Heart left ventricle (tissue), 16 donors: ENCODE measurements at regions of chr9 and their contacts with region 1.

Region 1: DNA sequence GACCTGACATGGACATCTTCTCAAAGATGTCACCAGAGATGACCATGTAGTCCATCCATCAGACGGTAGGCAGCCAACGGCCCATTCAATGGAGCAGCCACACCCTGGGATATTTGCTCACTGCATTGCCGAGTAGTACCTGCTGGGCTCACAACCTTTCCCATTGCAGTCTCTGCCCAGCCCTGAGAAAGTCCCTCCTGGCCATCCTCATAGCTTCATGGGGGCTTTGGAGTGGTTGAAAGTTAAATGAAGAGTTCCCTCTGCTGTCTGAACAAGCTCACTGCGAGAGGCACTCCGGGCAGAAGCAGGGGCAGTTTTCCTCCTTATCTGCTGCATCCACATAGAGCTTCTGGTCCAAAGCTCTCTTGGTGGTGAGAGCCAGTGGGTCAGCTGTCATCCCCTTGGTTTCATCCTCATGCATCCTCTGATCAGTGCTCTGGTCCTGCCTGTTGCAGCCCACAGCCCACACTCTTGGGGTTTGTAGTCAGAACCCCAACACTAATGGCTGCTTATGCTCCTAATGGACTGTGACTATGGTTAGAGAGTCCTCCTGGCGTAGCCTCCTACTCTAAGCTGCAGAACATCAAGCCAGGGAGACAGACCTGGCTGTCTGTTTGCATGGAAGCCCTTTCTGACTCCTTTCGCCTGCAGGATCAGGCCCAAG is 23.4 kb downstream of the TNFSF8 start:
- DNase-seq: no peak
- ATAC-seq: peak in 1 of 4 donors; percentile 24
- H3K4me3 ChIP-seq: no peak overlapping the region
- H3K27ac ChIP-seq: peak overlapping the region in 1 of 12 donors; percentile 76
- H3K4me1 ChIP-seq: peaks cover 0 to 23% (median 0%) of the 10 kb centered on the region in 12 donors
- H3K27me3 ChIP-seq: peaks cover 0 to 15% (median 0%) of the 10 kb centered on the region in 9 donors
- CTCF ChIP-seq: peak in 9 of 12 donors; percentile 18 to 45 (median 37)
- POLR2A ChIP-seq: no peak

Region 2: GRCh38 chr9:114405294-114406034 is 501.6 kb before region 1 on chr9:
- intact Hi-C with region 1: loop called in 7 of 10 experiments (anchors 5 to 10 kb)
- DNase-seq: peak; percentile 73 to 81 (median 79)
- ATAC-seq: peak; percentile 76 to 95 (median 92)
- H3K4me3 ChIP-seq: no peak overlapping the region
- H3K27ac ChIP-seq: no peak overlapping the region
- H3K4me1 ChIP-seq: peaks cover 0 to 7% (median 0%) of the 10 kb centered on the region in 12 donors
- H3K27me3 ChIP-seq: no peaks in the 10 kb centered on the region
- CTCF ChIP-seq: peak; percentile 72 to 87 (median 82)
- POLR2A ChIP-seq: no peak

Region 3: DNA sequence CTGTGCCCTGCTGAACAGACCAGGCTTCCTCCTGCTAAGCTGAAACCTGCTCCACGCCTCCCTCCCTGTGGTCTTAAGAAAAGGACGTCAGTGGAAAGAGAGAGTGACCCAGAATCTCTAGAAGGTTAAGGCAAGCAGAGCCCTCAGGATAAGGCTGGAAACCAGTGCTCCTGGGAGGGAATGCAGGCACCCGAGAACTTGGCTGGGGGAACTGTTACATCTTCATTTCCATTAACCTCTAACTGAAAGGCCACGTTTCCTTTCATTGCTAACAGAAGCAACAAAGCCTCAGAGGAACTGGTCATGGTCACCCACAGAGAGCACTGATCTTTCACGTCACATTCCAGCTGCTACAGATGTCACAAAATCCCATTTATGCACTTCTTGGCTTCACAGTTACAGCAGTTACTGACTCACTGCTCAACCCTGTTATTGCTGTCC is 493.2 kb before region 1 on chr9:
- intact Hi-C with region 1: loop called in 7 of 10 experiments (anchors 5 to 10 kb)
- DNase-seq: no peak
- ATAC-seq: peak in 1 of 4 donors; percentile 43
- H3K4me3 ChIP-seq: no peak overlapping the region
- H3K27ac ChIP-seq: peak overlapping the region in 2 of 12 donors; percentile 33 to 51
- H3K4me1 ChIP-seq: peaks cover 0 to 12% (median 0%) of the 10 kb centered on the region in 12 donors
- H3K27me3 ChIP-seq: no peaks in the 10 kb centered on the region
- CTCF ChIP-seq: no peak
- POLR2A ChIP-seq: no peak

Region 4: GRCh38 chr9:114434878-114435311 is 472.1 kb before region 1 on chr9:
- intact Hi-C with region 1: loop called in 1 of 10 experiments (anchors 10 kb)
- DNase-seq: no peak
- ATAC-seq: peak in 2 of 4 donors; percentile 36 to 41
- H3K4me3 ChIP-seq: no peak overlapping the region
- H3K27ac ChIP-seq: no peak overlapping the region
- H3K4me1 ChIP-seq: no peaks in the 10 kb centered on the region
- H3K27me3 ChIP-seq: peaks cover 0 to 11% (median 3%) of the 10 kb centered on the region in 9 donors
- CTCF ChIP-seq: peak; percentile 11 to 58 (median 38)
- POLR2A ChIP-seq: no peak

Region 5: GRCh38 chr9:114681594-114682332 is 225.3 kb before region 1 on chr9 and contains the start of gene TEX48:
- intact Hi-C with region 1: loop called in 4 of 10 experiments (anchors 5 to 10 kb)
- DNase-seq: peak in 2 of 5 donors; percentile 38 to 39
- ATAC-seq: peak in 3 of 4 donors; percentile 50 to 74 (median 55)
- H3K4me3 ChIP-seq: no peak within 1 kb of the TSS
- H3K27ac ChIP-seq: no peak within 1 kb of the TSS
- H3K4me1 ChIP-seq: no peaks in the 10 kb centered on the region
- H3K27me3 ChIP-seq: peaks cover 0 to 19% (median 0%) of the 10 kb centered on the region in 9 donors
- CTCF ChIP-seq: peak in 11 of 12 donors; percentile 31 to 53 (median 41)
- POLR2A ChIP-seq: no peak
- total RNA-seq, gene TEX48: not detected

Region 6: GRCh38 chr9:114738581-114739316 is 168.3 kb before region 1 on chr9:
- intact Hi-C with region 1: loop called in 9 of 10 experiments (anchors 1 to 5 kb)
- DNase-seq: peak; percentile 52 to 75 (median 60)
- ATAC-seq: peak in 3 of 4 donors; percentile 86 to 92 (median 87)
- H3K4me3 ChIP-seq: no peak overlapping the region
- H3K27ac ChIP-seq: no peak overlapping the region
- H3K4me1 ChIP-seq: peaks cover 0 to 24% (median 0%) of the 10 kb centered on the region in 12 donors
- H3K27me3 ChIP-seq: peaks cover 0 to 6% (median 0%) of the 10 kb centered on the region in 9 donors
- CTCF ChIP-seq: peak; percentile 49 to 86 (median 70)
- POLR2A ChIP-seq: no peak

Region 7: DNA sequence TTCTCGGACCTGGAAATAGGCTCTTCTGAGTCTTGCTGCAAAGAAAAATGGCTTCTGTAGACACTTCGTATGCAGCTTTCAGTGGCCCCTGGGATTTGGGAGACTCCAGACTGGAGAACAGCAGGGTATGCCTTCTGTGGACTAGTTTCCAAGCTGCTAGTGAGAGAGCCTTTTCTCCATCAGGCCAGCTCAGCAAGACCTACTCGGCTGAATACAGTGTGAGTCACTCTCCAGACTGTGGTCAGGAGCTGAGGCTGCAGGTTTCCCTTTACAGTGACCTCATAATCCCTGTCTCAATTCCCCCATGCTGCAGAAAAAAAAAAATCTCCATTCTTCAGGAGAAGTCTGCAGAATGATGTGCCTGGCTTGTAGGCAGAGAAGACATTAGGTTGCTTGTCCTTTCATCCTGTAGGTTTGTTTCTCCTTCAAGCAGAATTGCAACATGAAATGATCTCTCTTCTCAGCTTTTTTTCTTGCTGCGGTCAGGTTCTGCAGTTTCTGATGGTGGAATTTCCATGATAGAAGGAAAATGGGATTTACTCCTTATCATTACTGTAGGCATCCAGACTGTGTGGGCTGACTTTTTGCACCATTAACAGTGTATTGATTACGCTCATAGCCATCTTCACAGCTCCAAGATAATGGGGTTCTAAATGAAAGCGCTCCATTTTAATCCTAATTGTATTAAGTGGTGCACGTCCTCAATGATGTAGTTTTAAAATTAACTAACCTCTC is 101.7 kb after region 1 on chr9:
- intact Hi-C with region 1: loop called in 6 of 10 experiments (anchors 5 to 10 kb)
- DNase-seq: peak in 1 of 5 donors; percentile 43
- ATAC-seq: peak in 3 of 4 donors; percentile 59 to 88 (median 78)
- H3K4me3 ChIP-seq: no peak overlapping the region
- H3K27ac ChIP-seq: no peak overlapping the region
- H3K4me1 ChIP-seq: peaks cover 0 to 29% (median 0%) of the 10 kb centered on the region in 12 donors
- H3K27me3 ChIP-seq: peaks cover 0 to 39% (median 3%) of the 10 kb centered on the region in 9 donors
- CTCF ChIP-seq: no peak
- POLR2A ChIP-seq: no peak

Region 8: DNA sequence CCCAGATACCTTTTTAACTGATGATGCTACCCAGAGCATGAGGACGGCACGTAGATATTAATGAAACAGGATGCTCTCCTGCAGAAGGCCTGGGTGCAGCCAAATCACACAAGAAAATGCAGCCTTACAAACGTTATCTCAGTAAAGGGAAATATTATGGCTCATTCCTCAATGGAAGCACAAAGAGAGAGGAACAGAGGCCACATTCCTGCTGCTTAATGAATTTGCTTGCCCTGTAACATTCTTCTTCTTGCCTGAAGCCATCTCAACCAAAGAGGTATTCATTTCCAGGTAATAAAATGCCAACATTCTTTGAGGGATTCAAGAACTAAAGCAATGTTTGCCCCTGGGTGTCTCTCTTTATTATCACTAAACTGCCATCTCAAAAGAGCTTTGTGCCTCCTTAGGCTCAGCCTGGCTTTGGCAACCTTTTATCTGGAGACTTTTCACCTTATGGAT is 118.0 kb after region 1 on chr9:
- intact Hi-C with region 1: no loop called
- DNase-seq: no peak
- ATAC-seq: no peak
- H3K4me3 ChIP-seq: no peak overlapping the region
- H3K27ac ChIP-seq: peak overlapping the region in 1 of 12 donors; percentile 38
- H3K4me1 ChIP-seq: no peaks in the 10 kb centered on the region
- H3K27me3 ChIP-seq: peaks cover 0 to 6% (median 0%) of the 10 kb centered on the region in 9 donors
- CTCF ChIP-seq: no peak
- POLR2A ChIP-seq: no peak